Adrenal gland (tissue), 19 donors: ENCODE measurements at regions of chr6 and their contacts with region 1.

Region 1: GRCh38 chr6:107489636-107490565 is at the start of gene SOBP:
- DNase-seq: peak; percentile 54 to 79 (median 64)
- H3K4me3 ChIP-seq: peak within 1 kb of the TSS; percentile 57 to 93 (median 83)
- H3K27ac ChIP-seq: peak within 1 kb of the TSS; percentile 56 to 91 (median 77)
- H3K4me1 ChIP-seq: peaks cover 19 to 44% of the 10 kb centered on the region in 2 donors
- H3K27me3 ChIP-seq: no peaks in the 10 kb centered on the region
- CTCF ChIP-seq: peak in 3 of 6 experiments; percentile 17 to 22 (median 22)
- POLR2A ChIP-seq: peak in 1 of 2 donors; percentile 56
- total RNA-seq, gene SOBP: 7.4 to 25.6 (median 14.7) TPM

Region 2: DNA sequence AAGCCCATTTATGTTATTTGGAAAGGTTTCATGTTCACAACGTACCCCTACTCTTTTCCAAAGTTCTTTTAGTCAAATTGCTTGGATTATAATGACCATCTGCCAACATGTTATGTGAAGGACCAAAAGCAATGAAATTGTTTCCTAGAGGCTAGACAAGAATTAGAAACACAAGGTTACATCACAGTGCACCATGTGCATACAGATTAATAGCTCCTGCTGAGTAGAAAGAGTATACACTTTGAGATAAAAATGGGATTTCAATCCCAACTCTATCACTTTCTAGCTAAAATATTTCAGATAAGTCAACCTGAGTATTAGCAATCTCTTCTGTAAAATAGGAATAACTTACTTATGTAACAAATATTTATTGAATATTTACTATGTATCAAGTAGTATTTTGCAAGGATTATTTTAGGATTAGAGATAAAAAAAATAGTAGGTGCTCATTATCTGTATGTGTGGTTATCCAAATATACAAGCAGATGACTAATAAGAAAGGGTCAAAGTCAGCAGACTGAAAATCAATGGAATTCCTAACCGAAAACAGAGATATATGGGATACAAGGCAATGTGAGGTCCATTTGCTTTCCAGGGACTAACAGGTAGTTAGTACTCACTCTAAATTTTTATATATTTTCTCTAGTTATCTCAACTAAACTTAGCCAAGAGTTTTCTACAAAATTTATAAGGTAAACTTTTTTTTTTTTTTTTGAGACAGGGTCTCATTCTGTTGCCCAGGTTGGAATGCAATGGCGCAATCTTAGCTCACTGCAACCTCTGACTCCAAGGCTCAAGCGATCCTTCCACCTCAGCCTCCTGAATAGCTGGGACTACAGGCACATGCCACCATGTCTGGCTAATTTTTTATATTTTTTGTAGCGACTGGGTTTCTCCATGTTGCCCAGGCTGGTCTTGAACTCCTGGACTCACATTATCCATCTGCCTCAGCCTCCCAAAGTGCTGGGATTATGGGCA is 158.2 kb before region 1 on chr6:
- intact Hi-C with region 1: no loop called
- DNase-seq: no peak
- H3K4me3 ChIP-seq: no peak overlapping the region
- H3K27ac ChIP-seq: no peak overlapping the region
- H3K4me1 ChIP-seq: peaks cover 0 to 4% of the 10 kb centered on the region in 2 donors
- H3K27me3 ChIP-seq: no peaks in the 10 kb centered on the region
- CTCF ChIP-seq: no peak
- POLR2A ChIP-seq: no peak

Region 3: DNA sequence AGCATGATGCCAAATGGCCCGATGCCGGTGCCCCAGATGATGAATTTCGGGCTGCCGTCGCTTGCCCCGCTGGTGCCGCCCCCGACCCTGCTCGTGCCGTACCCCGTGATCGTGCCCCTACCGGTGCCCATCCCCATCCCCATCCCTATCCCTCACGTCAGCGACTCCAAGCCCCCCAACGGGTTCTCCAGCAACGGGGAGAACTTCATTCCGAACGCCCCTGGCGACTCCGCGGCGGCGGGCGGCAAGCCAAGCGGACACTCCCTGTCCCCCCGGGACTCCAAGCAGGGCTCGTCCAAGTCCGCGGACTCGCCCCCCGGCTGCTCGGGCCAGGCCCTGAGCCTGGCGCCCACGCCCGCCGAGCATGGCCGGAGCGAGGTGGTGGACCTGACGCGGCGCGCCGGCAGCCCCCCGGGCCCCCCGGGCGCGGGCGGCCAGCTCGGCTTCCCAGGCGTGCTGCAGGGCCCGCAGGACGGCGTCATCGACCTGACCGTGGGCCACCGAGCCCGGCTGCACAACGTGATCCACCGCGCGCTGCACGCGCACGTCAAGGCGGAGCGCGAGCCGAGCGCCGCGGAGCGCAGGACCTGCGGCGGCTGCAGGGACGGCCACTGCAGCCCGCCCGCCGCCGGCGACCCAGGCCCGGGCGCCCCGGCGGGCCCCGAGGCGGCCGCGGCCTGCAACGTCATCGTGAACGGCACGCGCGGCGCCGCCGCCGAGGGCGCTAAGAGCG is 144.6 kb after region 1 on chr6:
- intact Hi-C with region 1: loop called in 1 of 2 experiments (anchors 10 kb)
- DNase-seq: no peak
- H3K4me3 ChIP-seq: peak overlapping the region in 1 of 4 donors; percentile 48
- H3K27ac ChIP-seq: no peak overlapping the region
- H3K4me1 ChIP-seq: peaks cover 2 to 9% of the 10 kb centered on the region in 2 donors
- H3K27me3 ChIP-seq: no peaks in the 10 kb centered on the region
- CTCF ChIP-seq: no peak
- POLR2A ChIP-seq: no peak